ENCODE measurements at regions of chr12 and their contacts with region 1.

Region 1: DNA sequence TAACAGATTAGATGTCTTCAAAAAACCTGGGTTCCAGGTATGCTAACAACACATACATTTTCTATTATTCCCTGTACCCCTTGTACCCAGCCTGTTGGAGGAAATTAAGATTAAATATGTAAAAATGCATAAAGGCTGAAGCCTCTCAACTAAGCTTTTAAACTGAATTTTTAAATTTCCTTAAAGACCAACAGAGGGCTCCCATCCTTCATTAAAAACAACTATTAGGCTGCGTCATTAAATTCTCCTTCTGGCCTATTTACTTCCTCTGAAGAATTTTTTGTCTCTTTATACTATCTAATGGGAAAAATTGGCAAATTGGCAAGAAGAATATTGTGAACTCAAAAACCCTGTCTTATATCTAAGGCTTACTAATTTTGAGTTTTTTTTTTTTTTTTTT is 21.8 kb downstream of the SENP1 start:
- DNase-seq: no peak
- H3K4me3 ChIP-seq: no peak overlapping the region
- H3K27ac ChIP-seq: no peak overlapping the region
- H3K4me1 ChIP-seq: peaks cover 6% of the 10 kb centered on the region
- H3K27me3 ChIP-seq: no peaks in the 10 kb centered on the region
- CTCF ChIP-seq: peak; percentile 46; the same call in 1 of the 2 replicates

Region 2: DNA sequence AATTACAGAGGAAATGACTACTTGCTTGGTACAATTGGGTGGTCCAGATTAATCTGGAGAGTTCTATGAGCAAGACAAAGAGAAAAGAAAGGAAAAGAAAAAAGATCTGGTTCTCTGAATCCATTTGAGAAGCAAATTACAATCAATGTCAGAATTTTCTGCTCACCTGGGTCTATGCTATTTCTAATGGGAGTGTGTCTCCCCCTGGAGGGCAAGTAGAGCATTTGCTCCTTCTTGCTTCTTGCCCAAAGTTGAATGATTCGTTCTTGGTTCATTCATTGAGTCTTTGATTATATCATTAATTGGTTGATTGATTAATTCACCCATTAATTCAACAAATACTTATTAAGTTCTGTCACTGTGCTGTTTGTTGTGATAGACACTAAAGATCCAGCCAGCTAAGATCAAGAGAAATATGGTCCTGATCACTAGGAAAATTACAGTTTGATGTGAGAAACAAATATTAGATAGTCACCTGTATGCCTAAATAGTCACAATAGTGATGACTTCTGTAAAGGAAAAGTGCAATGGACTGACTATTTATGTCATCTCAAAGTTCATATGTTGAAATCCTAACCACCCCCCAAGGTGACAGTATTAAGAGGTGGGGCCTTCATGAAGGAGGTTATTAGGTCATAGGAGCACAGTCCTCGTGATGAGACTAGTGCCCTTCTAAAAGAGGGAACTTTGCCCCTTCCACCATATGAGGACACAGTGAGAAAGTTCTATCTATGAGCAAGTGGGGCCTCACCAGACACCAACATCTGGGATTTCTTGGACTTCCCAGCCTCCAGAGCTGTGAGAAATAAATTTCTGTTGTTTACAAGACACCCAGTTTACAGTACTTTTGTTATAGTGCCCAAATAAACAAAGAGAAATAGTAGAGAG is 81.3 kb after region 1 on chr12:
- CTCF ChIA-PET with region 1: no interaction called
- POLR2A ChIA-PET with region 1: no interaction called
- intact Hi-C with region 1: loop called (anchors 5 kb)
- DNase-seq: peak in 1 of 2 experiments; percentile 29
- H3K4me3 ChIP-seq: no peak overlapping the region
- H3K27ac ChIP-seq: no peak overlapping the region
- H3K4me1 ChIP-seq: no peaks in the 10 kb centered on the region
- H3K27me3 ChIP-seq: no peaks in the 10 kb centered on the region
- CTCF ChIP-seq: peak; percentile 91